ENCODE measurements at regions of chr20 and their contacts with region 1.

Region 1: DNA sequence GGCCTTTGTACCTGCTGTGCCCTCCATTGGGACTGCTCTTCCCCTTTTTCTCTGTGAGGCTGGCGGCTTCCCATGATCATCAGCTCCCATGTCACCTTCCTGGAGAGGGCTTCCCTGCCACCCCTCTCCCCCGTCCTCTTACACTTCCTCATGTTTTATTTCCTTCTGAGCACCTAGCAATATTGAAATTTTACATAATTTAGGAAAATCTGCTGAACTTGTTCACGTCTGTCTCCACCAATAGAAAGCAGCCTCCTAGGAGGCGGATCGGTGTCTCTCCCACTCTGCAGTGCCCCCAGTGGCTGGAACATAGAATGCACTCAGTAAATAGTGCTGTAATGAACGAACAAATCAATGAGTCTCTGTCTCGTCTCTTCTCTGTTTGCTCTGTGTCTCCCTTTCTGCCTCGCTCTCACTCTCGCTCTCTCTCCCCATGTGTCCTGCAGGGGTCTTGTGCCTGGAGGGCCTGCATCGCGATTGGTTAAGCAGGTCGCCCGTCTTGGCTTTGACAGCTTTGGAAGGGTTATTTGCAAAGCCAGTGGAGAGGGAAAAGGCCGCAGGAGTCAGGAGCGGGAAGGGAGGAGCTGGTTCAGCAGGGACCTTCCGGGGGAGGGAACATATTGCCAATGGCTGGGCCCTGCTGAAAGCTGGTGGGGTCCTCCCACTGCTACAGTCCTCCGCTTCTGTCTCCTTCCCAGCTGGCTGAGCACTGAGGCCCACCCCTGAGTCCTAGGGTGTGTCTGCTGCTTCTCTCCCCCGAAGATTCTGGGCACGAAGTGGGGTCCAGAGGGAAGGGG is 12.1 kb upstream of the OCSTAMP start:
- DNase-seq: peak; percentile 81 to 88 (median 88)
- ATAC-seq: peak; percentile 92
- H3K4me3 ChIP-seq: peak overlapping the region; percentile 9; the same call in 1 of the 2 replicates
- H3K27ac ChIP-seq: no peak overlapping the region; the same call in 2 of the 3 replicates
- H3K4me1 ChIP-seq: peaks cover 19 to 31% of the 10 kb centered on the region in 2 experiments
- H3K27me3 ChIP-seq: peaks cover 0 to under 1% of the 10 kb centered on the region in 2 experiments; a peak in 1 of 5 replicates
- CTCF ChIP-seq: peak; percentile 77 to 94 (median 86)
- EP300 ChIP-seq: no peak
- POLR2A ChIP-seq: no peak
- RAD21 ChIP-seq: peak in 1 of 2 experiments; percentile 35; a peak in 1 of 4 replicates

Region 2: GRCh38 chr20:46070215-46070900 is 492.2 kb before region 1 on chr20:
- CTCF ChIA-PET with region 1: no interaction called
- POLR2A ChIA-PET with region 1: no interaction called
- in situ Hi-C with region 1: no loop called
- intact Hi-C with region 1: no loop called
- DNase-seq: no peak
- ATAC-seq: no peak
- H3K4me3 ChIP-seq: no peak overlapping the region
- H3K27ac ChIP-seq: no peak overlapping the region
- H3K4me1 ChIP-seq: no peaks in the 10 kb centered on the region
- H3K27me3 ChIP-seq: no peaks in the 10 kb centered on the region
- CTCF ChIP-seq: no peak
- EP300 ChIP-seq: no peak
- POLR2A ChIP-seq: no peak
- RAD21 ChIP-seq: no peak

Region 3: GRCh38 chr20:46458866-46459750 is 103.5 kb before region 1 on chr20:
- CTCF ChIA-PET with region 1: no interaction called
- POLR2A ChIA-PET with region 1: no interaction called
- in situ Hi-C with region 1: no loop called
- intact Hi-C with region 1: no loop called
- DNase-seq: peak in 1 of 4 experiments; percentile 22
- ATAC-seq: no peak
- H3K4me3 ChIP-seq: no peak overlapping the region
- H3K27ac ChIP-seq: no peak overlapping the region
- H3K4me1 ChIP-seq: no peaks in the 10 kb centered on the region
- H3K27me3 ChIP-seq: peaks cover 18 to 27% of the 10 kb centered on the region in 2 experiments; a peak in 4 of 5 replicates
- CTCF ChIP-seq: no peak
- EP300 ChIP-seq: no peak
- POLR2A ChIP-seq: no peak
- RAD21 ChIP-seq: no peak

Region 4: GRCh38 chr20:46520976-46521579 is 41.5 kb before region 1 on chr20:
- CTCF ChIA-PET with region 1: no interaction called
- POLR2A ChIA-PET with region 1: no interaction called
- in situ Hi-C with region 1: no loop called
- intact Hi-C with region 1: no loop called
- DNase-seq: peak; percentile 33 to 64 (median 42)
- ATAC-seq: peak; percentile 80
- H3K4me3 ChIP-seq: no peak overlapping the region
- H3K27ac ChIP-seq: no peak overlapping the region
- H3K4me1 ChIP-seq: no peaks in the 10 kb centered on the region
- H3K27me3 ChIP-seq: no peaks in the 10 kb centered on the region; a peak in 1 of 5 replicates
- CTCF ChIP-seq: peak; percentile 59 to 69 (median 67)
- EP300 ChIP-seq: no peak
- POLR2A ChIP-seq: no peak
- RAD21 ChIP-seq: peak; percentile 25 to 80; a peak in 3 of 4 replicates

Region 5: GRCh38 chr20:46539113-46539512 is 23.5 kb before region 1 on chr20:
- CTCF ChIA-PET with region 1: no interaction called
- POLR2A ChIA-PET with region 1: no interaction called
- in situ Hi-C with region 1: no loop called
- intact Hi-C with region 1: no loop called
- DNase-seq: no peak
- ATAC-seq: no peak
- H3K4me3 ChIP-seq: no peak overlapping the region
- H3K27ac ChIP-seq: no peak overlapping the region
- H3K4me1 ChIP-seq: peaks cover 0 to 5% of the 10 kb centered on the region in 2 experiments; a peak in 1 of 5 replicates
- H3K27me3 ChIP-seq: peaks cover 16 to 24% of the 10 kb centered on the region in 2 experiments; a peak in 4 of 5 replicates
- CTCF ChIP-seq: peak in 1 of 3 experiments; percentile 10; a peak in 1 of 6 replicates
- EP300 ChIP-seq: no peak
- POLR2A ChIP-seq: no peak
- RAD21 ChIP-seq: no peak

Region 6: DNA sequence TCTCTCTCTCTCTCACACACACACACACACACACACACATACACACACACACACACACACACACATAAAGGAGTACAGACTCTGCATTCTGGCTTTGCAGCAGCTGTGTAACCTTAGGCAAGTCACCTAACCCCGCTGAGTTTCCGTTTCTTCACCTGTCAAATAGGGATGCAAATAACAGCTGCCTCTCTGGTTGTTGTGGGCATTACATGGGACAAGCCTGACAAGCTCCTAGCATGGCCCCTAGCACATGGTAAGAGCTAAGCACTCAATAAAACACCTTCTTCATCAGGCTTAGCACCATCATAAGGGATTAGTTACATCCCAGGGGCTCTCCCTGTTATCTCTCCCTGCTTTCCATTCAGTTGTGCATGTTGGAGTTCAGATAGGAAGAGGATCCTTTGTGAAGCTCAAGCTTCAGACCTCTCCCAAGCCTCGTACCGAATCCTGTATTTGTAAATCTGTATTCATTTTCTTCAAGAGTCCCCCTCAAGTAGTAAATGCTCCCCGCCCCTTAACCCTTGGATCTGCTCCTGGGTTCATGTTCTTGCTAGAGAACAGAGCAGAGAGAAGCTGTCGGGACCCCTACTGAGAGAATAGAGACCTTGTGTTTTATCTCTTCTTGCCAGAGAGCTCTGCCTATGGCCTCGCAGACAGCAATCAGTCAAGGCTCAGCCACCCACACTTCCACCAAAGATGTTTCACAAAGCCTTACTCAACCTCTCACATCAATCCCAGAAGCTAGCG is 86.5 kb after region 1 on chr20:
- CTCF ChIA-PET with region 1: no interaction called
- POLR2A ChIA-PET with region 1: no interaction called
- in situ Hi-C with region 1: no loop called
- intact Hi-C with region 1: loop called (anchors 10 kb)
- DNase-seq: peak; percentile 64 to 92 (median 78)
- ATAC-seq: peak; percentile 94
- H3K4me3 ChIP-seq: no peak overlapping the region
- H3K27ac ChIP-seq: peak overlapping the region; percentile 63
- H3K4me1 ChIP-seq: peaks cover 20 to 22% of the 10 kb centered on the region in 2 experiments; a peak in 4 of 5 replicates
- H3K27me3 ChIP-seq: no peaks in the 10 kb centered on the region
- CTCF ChIP-seq: peak; percentile 14 to 22 (median 19); a peak in 1 of 6 replicates
- EP300 ChIP-seq: peak; percentile 64; the same call in 1 of the 2 replicates
- POLR2A ChIP-seq: no peak
- RAD21 ChIP-seq: no peak

Region 7: DNA sequence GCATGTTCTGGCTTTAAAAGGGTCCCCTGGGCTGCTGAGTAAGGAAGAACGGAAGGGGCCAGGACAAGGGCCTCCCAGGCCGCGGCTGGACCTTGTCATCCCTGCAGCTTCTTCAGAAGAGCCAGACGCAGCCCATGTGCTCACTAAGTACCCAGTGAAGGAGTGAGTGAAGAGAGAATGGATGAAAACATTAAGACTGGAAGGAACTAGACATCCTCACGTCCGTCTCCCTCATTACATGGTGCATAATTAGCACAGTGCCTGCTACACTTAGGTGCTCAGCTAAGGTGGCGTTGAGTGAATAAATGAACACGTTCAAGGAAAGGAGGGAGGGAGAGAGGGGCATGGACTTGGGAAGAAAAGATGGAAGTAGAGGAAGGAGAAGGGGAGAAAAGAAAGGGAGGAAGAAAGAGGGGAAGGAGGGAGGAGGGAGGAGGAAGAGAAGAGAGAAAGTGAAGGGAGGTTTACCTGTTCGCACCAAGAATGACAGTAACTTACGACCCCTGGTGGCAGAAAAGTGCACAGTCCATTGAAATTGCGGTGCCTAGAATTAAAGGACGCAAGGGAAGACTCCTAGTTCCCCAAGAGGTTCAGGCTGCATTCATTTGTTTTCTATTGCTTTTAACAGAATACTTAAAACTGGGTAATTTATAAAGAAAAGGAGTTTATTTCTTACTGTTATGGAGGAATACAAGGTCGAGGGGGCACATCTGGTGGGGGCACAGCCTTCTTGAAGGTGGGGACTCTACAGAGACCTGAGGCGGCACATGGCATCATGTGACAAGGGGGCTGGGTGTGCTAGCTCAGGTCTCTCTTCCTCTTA is 118.7 kb after region 1 on chr20:
- CTCF ChIA-PET with region 1: interaction called, 10 read pairs
- POLR2A ChIA-PET with region 1: no interaction called
- in situ Hi-C with region 1: no loop called
- intact Hi-C with region 1: loop called (anchors 2 kb)
- DNase-seq: peak; percentile 56 to 81 (median 62)
- ATAC-seq: peak; percentile 46
- H3K4me3 ChIP-seq: no peak overlapping the region
- H3K27ac ChIP-seq: no peak overlapping the region
- H3K4me1 ChIP-seq: peaks cover 3 to 25% of the 10 kb centered on the region in 2 experiments; a peak in 4 of 5 replicates
- H3K27me3 ChIP-seq: no peaks in the 10 kb centered on the region
- CTCF ChIP-seq: peak; percentile 78 to 83 (median 82)
- EP300 ChIP-seq: no peak
- POLR2A ChIP-seq: 0 out of 2 replicates have a peak, but pooled peaks have one; percentile 26
- RAD21 ChIP-seq: peak; percentile 47 to 81; a peak in 3 of 4 replicates

Region 8: DNA sequence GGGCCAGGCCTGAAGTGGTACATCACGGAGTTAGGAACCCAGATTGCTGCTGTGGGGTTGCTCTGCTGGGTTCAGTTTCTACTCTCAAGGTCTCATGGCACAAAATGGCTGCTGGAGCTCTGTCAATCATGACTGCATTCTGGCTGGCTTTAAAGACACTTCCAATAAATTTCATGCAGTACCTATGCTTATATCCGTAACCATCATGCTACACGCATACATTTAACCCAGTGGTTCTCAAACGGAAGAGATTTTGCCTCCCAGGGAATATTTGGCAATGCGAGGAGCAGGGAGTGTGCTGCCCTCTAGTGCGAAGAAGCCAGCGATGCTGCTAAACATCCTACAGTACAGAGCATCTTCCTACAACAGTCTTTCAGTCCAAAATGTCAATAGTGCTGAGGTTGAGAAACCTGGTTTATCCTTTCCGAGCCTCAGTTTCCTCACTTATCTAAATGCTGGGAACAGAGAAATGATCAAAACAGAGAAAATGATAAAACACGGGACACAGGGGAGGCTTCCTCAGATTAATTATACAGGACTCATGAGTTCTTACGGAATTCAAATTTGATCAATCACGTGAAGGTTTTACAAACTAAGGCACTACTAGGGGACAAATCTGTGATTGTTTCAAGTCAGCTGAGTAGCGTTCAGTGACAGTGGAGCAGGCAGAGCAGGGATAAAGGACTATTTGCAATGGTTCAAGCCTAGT is 137.2 kb after region 1 on chr20:
- CTCF ChIA-PET with region 1: interaction called, 3 read pairs
- POLR2A ChIA-PET with region 1: no interaction called
- in situ Hi-C with region 1: no loop called
- intact Hi-C with region 1: loop called (anchors 5 kb)
- DNase-seq: peak; percentile 42 to 68 (median 48)
- ATAC-seq: peak; percentile 93
- H3K4me3 ChIP-seq: no peak overlapping the region
- H3K27ac ChIP-seq: no peak overlapping the region
- H3K4me1 ChIP-seq: 0 out of 5 replicates have a peak, but pooled peaks cover 0 to 5% of the 10 kb centered on the region in 2 experiments
- H3K27me3 ChIP-seq: no peaks in the 10 kb centered on the region
- CTCF ChIP-seq: peak; percentile 77 to 82 (median 81)
- EP300 ChIP-seq: no peak
- POLR2A ChIP-seq: no peak
- RAD21 ChIP-seq: peak; percentile 45 to 79

Measured in K562 (cell line).